ENCODE measurements at regions of chr2 and their contacts with region 1.

Region 1: DNA sequence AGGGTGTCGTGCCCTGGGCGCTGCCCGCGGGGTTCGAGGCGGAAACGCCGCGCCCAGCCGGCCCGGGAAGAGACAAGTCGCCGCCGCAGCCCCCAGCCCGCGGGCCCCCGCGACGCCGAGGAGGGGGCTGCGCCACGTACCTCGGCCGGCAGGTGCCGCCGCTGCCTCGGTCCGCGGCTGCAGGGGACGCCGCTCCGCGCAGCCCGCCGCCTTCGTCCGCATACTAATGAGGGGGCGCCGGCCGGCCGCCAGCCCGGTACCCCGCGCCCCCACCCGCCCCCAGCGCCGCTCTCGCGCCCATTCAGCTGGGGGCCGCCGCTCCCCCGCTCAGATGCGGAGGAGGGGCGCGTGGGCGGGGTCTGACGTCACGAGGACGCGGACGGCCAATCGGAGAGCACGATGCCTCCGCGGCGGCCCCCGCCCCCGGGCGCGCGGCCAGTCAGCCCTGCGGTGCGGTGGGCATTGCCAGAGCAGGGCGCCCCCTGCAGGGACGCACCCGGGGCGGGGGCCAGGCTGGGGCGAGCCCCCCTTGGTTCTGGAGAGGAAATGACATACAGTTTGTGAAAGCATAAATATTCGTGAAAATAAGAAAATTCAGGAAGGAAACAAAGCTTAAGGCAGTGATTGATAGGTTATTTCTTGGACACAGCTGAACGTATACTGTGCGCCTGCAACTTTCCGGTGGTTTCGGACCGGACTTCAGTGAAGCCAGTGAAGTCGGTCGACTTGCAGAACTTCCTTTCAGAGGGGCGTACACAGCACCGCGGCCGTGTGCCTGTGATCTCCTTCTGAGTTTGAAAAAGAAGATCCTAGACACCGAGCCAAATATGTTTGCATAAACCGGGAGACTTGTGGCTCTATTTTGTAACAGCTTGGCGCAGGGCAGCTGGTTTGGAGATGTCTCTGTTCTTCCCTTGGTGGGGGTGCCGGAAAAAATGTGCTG is at the start of gene ST3GAL5:
- DNase-seq: peak; percentile 93
- H3K4me3 ChIP-seq: peak within 1 kb of the TSS; percentile 69
- H3K27ac ChIP-seq: peak within 1 kb of the TSS; percentile 78
- H3K4me1 ChIP-seq: peaks cover 5% of the 10 kb centered on the region
- H3K27me3 ChIP-seq: peaks cover 8% of the 10 kb centered on the region
- CTCF ChIP-seq: peak; percentile 48
- total RNA-seq, gene ST3GAL5: 2.6 to 3.5 TPM

Region 2: DNA sequence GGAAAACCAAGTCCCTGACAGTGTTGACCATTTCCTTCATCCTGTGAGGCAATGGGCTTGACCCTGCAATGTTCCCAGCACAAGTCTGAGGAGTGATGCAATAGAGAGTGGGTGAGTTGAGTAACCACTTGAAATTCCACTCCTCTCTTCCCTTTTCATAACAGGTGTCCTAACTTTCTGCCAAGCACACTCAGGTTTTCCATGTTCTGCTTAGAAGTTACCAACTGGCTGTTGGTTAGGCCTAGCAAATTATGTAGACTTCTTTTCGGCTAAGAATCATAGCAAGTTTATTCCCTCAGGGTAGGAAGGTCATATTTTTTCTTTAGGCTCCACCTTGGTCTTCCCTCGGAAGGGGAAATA is 183.3 kb before region 1 on chr2:
- intact Hi-C with region 1: no loop called
- DNase-seq: no peak
- H3K4me3 ChIP-seq: no peak overlapping the region
- H3K27ac ChIP-seq: peak overlapping the region; percentile 29
- H3K4me1 ChIP-seq: no peaks in the 10 kb centered on the region
- H3K27me3 ChIP-seq: no peaks in the 10 kb centered on the region
- CTCF ChIP-seq: no peak

Region 3: GRCh38 chr2:85826990-85827878 is 61.7 kb before region 1 on chr2:
- intact Hi-C with region 1: loop called (anchors 2 kb)
- DNase-seq: peak; percentile 72
- H3K4me3 ChIP-seq: no peak overlapping the region
- H3K27ac ChIP-seq: no peak overlapping the region
- H3K4me1 ChIP-seq: no peaks in the 10 kb centered on the region
- H3K27me3 ChIP-seq: no peaks in the 10 kb centered on the region
- CTCF ChIP-seq: peak; percentile 87

Region 4: GRCh38 chr2:85999061-85999831 is 110.3 kb after region 1 on chr2:
- intact Hi-C with region 1: no loop called
- DNase-seq: no peak
- H3K4me3 ChIP-seq: no peak overlapping the region
- H3K27ac ChIP-seq: peak overlapping the region; percentile 66
- H3K4me1 ChIP-seq: no peaks in the 10 kb centered on the region
- H3K27me3 ChIP-seq: no peaks in the 10 kb centered on the region
- CTCF ChIP-seq: no peak

Region 5: DNA sequence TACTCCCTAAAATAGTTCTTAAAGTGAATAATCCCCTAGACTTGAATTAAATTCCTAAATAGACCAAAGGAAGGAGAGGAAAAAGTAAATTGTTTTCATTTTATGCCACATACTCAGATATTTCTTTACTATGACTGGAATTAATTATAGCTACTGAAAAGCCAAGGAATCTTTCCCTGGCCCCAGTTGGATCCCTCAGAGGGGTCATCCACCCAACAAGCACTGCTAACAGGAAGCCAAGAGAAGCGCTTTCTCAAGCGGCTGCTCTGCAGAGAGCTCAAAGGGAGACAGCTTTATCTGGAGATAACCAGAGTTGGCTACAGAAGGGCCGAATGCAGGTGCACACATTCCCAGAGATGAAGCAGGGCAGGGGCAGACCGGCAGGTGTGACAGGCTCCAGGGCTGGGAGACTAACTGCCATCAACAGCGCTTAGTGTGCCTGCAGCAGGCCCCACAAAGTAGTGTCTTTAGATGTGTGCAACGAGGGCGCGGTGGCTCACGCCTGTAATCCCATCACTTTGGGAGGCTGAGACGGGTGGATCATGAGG is 165.7 kb after region 1 on chr2:
- intact Hi-C with region 1: no loop called
- DNase-seq: no peak
- H3K4me3 ChIP-seq: no peak overlapping the region
- H3K27ac ChIP-seq: no peak overlapping the region
- H3K4me1 ChIP-seq: no peaks in the 10 kb centered on the region
- H3K27me3 ChIP-seq: no peaks in the 10 kb centered on the region
- CTCF ChIP-seq: no peak

Measured in colonic mucosa (tissue), 4 donors.